ENCODE measurements at regions of chr1 and their contacts with region 1.

Region 1: DNA sequence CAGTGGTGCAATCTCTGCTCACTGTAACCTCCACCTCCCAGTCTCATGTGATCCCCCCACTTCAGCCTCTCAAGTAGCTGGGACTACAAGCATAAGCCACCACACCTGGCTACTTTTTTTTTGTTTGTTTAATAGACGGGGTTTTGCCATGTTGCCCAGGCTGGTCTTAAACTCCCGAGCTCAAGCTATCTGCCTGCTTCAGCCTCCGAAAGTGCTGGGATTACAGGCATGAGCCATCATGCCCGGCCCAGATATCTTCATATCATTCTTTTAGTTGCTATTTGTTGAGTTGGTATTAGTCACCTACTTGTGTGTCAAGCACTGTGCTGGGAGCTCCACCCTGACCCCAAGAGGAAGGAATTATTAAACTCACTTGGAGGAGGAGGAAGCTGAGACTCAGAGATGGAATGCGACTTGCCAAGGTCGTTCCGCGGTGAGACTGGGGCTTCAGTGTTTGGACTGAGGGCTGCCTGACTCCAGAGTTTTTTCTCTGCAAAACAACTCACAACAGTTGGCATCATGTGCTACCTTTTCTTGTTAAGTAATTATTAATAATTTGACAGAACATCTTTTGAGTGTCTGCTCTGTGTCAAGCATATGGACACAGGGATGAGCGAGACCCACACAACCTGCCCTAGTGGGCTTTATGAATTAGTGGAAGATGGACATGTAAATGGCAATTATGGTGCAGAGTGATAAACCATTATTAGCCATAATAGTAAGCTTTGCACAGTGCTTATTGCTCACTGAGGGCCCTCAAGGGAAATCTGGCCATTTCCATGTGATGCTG is 132.0 kb downstream of the FOXD2 start:
- DNase-seq: peak; percentile 51
- ATAC-seq: peak; percentile 84
- H3K4me3 Mint-ChIP-seq: no peak overlapping the region
- H3K27ac Mint-ChIP-seq: no peak overlapping the region
- H3K4me1 Mint-ChIP-seq: peaks cover 55% of the 10 kb centered on the region
- H3K27me3 Mint-ChIP-seq: peaks cover 41% of the 10 kb centered on the region
- CTCF ChIP-seq: no peak

Region 2: DNA sequence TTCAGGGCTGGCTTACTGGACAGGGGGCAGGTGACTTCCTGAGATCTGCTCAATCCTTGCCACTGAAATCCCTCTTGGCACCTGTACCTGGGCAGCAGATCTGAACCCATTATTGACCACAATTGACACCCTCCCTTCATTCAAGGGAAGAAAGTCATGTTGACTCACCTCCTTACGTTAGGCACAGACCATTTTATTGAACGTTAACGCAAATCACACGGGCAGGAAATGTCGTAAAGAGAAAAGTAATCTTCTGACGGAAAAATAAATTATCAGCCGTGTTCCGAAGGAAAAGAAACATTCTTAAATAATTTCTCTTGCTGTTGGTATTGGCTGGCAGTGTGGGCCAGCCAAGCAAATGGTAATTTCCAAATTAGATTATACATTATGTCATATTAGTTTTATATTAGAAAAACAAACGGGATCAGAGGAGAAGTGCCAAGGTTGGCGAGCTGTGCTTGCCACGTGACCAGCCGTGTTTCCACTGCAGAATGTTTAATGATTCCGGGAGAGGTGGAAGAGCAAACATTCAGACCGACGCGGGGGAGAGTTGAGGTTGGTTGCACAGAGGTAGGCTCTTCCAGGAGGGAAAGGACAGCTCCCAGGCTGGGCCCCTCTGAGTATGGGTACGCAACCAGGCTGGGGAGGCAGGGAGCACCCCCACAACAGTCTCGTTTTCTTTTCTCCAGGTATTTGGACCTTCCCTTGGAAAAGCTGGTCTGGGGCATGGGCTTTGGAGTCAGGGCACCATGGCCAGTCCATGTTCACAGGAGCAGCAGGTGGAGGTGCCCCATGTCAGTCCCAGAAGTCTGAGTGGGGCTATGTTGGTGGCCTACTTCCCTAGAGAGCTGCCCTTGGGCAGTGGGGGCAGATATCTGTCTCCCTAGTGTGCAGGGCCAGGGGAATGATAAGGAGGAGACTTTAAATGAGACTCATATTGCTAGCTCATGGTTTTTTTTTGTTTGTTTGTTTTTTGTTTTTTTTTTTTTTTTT is 11.0 kb before region 1 on chr1:
- CTCF ChIA-PET with region 1: interaction called, 17 read pairs
- POLR2A ChIA-PET with region 1: no interaction called
- DNase-seq: no peak
- ATAC-seq: no peak
- H3K4me3 Mint-ChIP-seq: no peak overlapping the region
- H3K27ac Mint-ChIP-seq: no peak overlapping the region
- H3K4me1 Mint-ChIP-seq: peaks cover 33% of the 10 kb centered on the region
- H3K27me3 Mint-ChIP-seq: peaks cover 51% of the 10 kb centered on the region
- CTCF ChIP-seq: no peak